AG04450 (cell line): ENCODE measurements at regions of chr9 and their contacts with region 1.

Region 1: GRCh38 chr9:133149126-133150107 is 14.3 kb downstream of the GBGT1 start:
- DNase-seq: peak; percentile 51
- H3K4me3 ChIP-seq: peak overlapping the region; percentile 76
- H3K27ac ChIP-seq: peak overlapping the region; percentile 61
- H3K27me3 ChIP-seq: no peaks in the 10 kb centered on the region
- CTCF ChIP-seq: 0 out of 2 replicates have a peak, but pooled peaks have one; percentile 8

Region 2: GRCh38 chr9:133030317-133031129 is 118.9 kb before region 1 on chr9 and contains the start of gene GTF3C5:
- CTCF ChIA-PET with region 1: interaction called, 25 read pairs
- POLR2A ChIA-PET with region 1: interaction called, 5 read pairs
- DNase-seq: peak; percentile 96
- H3K4me3 ChIP-seq: peak within 1 kb of the TSS; percentile 96
- H3K27ac ChIP-seq: peak within 1 kb of the TSS; percentile 83
- H3K27me3 ChIP-seq: no peaks in the 10 kb centered on the region
- CTCF ChIP-seq: peak; percentile 14; the same call in 1 of the 2 replicates
- polyA plus RNA-seq, gene GTF3C5: 36.4 and 39.2 TPM in 2 replicates

Region 3: GRCh38 chr9:133103183-133103986 is 46.0 kb before region 1 on chr9:
- CTCF ChIA-PET with region 1: interaction called, 264 read pairs
- POLR2A ChIA-PET with region 1: interaction called, 3 read pairs
- DNase-seq: no peak
- H3K4me3 ChIP-seq: no peak overlapping the region
- H3K27ac ChIP-seq: no peak overlapping the region
- H3K27me3 ChIP-seq: no peaks in the 10 kb centered on the region
- CTCF ChIP-seq: peak; percentile 97

Region 4: GRCh38 chr9:133115448-133116345 is 33.7 kb before region 1 on chr9:
- CTCF ChIA-PET with region 1: interaction called, 264 read pairs
- POLR2A ChIA-PET with region 1: no interaction called
- DNase-seq: no peak
- H3K4me3 ChIP-seq: no peak overlapping the region
- H3K27ac ChIP-seq: no peak overlapping the region
- H3K27me3 ChIP-seq: no peaks in the 10 kb centered on the region
- CTCF ChIP-seq: no peak

Region 5: GRCh38 chr9:133122935-133123611 is 26.3 kb before region 1 on chr9:
- CTCF ChIA-PET with region 1: interaction called, 25 read pairs
- POLR2A ChIA-PET with region 1: interaction called, 3 read pairs
- DNase-seq: no peak
- H3K4me3 ChIP-seq: no peak overlapping the region
- H3K27ac ChIP-seq: peak overlapping the region; percentile 21
- H3K27me3 ChIP-seq: no peaks in the 10 kb centered on the region
- CTCF ChIP-seq: no peak

Region 6: GRCh38 chr9:133133681-133134418 is 15.6 kb before region 1 on chr9:
- CTCF ChIA-PET with region 1: interaction called, 53 read pairs
- POLR2A ChIA-PET with region 1: interaction called, 4 read pairs
- DNase-seq: peak; percentile 76
- H3K4me3 ChIP-seq: no peak overlapping the region
- H3K27ac ChIP-seq: peak overlapping the region; percentile 89
- H3K27me3 ChIP-seq: no peaks in the 10 kb centered on the region
- CTCF ChIP-seq: no peak

Region 7: GRCh38 chr9:133168432-133168831 is 19.0 kb after region 1 on chr9:
- CTCF ChIA-PET with region 1: no interaction called
- POLR2A ChIA-PET with region 1: no interaction called
- DNase-seq: no peak
- H3K4me3 ChIP-seq: no peak overlapping the region
- H3K27ac ChIP-seq: no peak overlapping the region
- H3K27me3 ChIP-seq: peaks cover 14% of the 10 kb centered on the region
- CTCF ChIP-seq: no peak